ENCODE measurements at regions of chr16 and their contacts with region 1.

Region 1: GRCh38 chr16:89785523-89786155 is 30.8 kb downstream of the FANCA start:
- DNase-seq: peak in 7 of 9 donors; percentile 27 to 61 (median 49)
- ATAC-seq: peak; percentile 82
- H3K4me3 ChIP-seq: no peak overlapping the region
- H3K4me3 Mint-ChIP-seq: peak overlapping the region; percentile 13 to 80 (median 60)
- H3K27ac ChIP-seq: no peak overlapping the region
- H3K27ac Mint-ChIP-seq: peak overlapping the region; percentile 61 to 91 (median 80)
- H3K4me1 ChIP-seq: peaks cover 28 to 36% of the 10 kb centered on the region in 2 donors
- H3K4me1 Mint-ChIP-seq: peaks cover 21 to 32% (median 28%) of the 10 kb centered on the region in 7 donors
- H3K27me3 ChIP-seq: no peaks in the 10 kb centered on the region
- H3K27me3 Mint-ChIP-seq: no peaks in the 10 kb centered on the region

Region 2: DNA sequence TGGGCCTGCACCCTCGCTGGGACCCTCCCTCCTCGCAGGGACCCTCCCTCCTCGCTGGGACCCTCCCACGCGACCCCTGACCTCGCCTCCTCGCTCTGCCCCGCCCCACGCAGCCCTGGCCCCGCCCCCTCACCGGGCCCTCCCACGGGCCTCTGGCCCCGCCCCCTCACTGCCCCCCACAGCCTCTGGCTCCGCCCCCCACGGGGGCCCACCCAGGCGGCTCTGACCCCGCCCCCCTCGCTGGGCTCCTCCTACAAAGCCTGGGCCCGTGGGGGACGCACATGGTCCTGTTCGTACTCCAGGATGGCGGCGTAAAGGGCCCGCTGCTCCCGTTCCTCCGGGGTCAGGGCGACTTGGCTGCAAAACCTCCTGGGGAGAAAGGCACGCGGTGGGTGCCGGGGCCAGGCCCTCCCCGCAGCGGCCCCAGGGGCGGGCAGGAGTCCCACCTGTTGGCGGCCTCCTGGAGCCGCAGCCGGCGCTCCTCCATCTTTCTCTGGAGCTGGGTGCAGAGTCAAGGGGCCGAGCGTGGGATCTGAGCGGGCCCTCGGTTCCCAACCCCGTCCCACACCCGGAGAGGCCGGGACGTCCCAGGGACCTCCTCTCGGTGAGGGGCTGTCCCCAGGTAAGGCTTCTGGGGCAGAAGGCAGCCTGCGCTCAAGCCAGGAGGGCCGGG is 73.9 kb before region 1 on chr16:
- CTCF ChIA-PET with region 1: interaction called, 138 read pairs
- POLR2A ChIA-PET with region 1: interaction called, 6 read pairs
- intact Hi-C with region 1: no loop called
- DNase-seq: peak; percentile 48 to 86 (median 62)
- ATAC-seq: peak; percentile 96
- H3K4me3 ChIP-seq: peak overlapping the region; percentile 47
- H3K4me3 Mint-ChIP-seq: peak overlapping the region in 7 of 10 donors; percentile 42 to 78 (median 68)
- H3K27ac ChIP-seq: peak overlapping the region; percentile 58
- H3K27ac Mint-ChIP-seq: peak overlapping the region in 1 of 9 donors; percentile 29
- H3K4me1 ChIP-seq: peaks cover 0 to 7% of the 10 kb centered on the region in 2 donors
- H3K4me1 Mint-ChIP-seq: peaks cover 0 to 7% (median 3%) of the 10 kb centered on the region in 7 donors
- H3K27me3 ChIP-seq: no peaks in the 10 kb centered on the region
- H3K27me3 Mint-ChIP-seq: no peaks in the 10 kb centered on the region

Region 3: DNA sequence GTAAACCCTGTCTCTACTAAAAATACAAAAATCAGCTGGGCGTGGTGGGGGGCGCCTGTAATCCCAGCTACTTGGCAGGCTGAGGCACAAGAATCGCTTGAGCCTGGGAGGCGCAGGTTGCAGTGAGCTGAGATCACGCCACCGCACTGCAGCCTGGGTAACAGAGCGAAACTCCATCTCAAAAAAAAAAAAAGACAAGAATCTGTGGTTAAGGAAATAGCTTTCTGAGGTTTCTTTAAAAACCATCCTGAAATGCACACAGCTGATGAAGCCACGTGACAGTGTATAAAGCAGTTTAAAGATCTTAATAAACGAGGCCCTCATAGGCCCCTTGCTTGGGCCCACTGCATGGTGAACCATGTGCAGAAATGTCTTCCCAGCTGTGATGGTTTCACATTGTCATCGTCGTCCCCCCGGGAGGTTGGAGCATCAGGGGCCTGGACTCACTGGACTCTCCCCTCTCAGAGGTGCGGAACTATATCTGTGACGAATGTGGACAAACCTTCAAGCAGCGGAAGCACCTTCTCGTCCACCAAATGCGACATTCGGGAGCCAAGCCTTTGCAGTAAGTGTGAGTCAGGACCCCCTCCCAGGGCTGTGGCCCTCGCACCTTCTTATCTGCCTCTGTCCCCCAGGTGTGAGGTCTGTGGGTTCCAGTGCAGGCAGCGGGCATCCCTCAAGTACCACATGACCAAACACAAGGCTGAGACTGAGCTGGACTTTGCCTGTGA is 48.1 kb before region 1 on chr16:
- CTCF ChIA-PET with region 1: no interaction called
- POLR2A ChIA-PET with region 1: interaction called, 15 read pairs
- intact Hi-C with region 1: loop called in 1 of 2 experiments (anchors 5 kb)
- DNase-seq: peak in 7 of 9 donors; percentile 63 to 83 (median 76)
- ATAC-seq: peak; percentile 86
- H3K4me3 ChIP-seq: no peak overlapping the region
- H3K4me3 Mint-ChIP-seq: peak overlapping the region; percentile 39 to 80 (median 66)
- H3K27ac ChIP-seq: peak overlapping the region; percentile 46
- H3K27ac Mint-ChIP-seq: peak overlapping the region; percentile 68 to 94 (median 86)
- H3K4me1 ChIP-seq: peaks cover 28 to 40% of the 10 kb centered on the region in 2 donors
- H3K4me1 Mint-ChIP-seq: peaks cover 4 to 70% (median 37%) of the 10 kb centered on the region in 7 donors
- H3K27me3 ChIP-seq: no peaks in the 10 kb centered on the region
- H3K27me3 Mint-ChIP-seq: no peaks in the 10 kb centered on the region